Activated CD8-positive, alpha-beta T cell treated with anti-CD3 and anti-CD28 coated beads, Interleukin-2, amount 10 ng/mL, durations not matched to agents 7 days and 5 days (primary cell): ENCODE measurements at regions of chr6 and their contacts with region 1.

Region 1: GRCh38 chr6:118709859-118710350 is 58.5 kb upstream of the CEP85L start:
- DNase-seq: peak; percentile 89
- ATAC-seq: peak; percentile 86
- H3K4me3 Mint-ChIP-seq: peak overlapping the region; percentile 98
- H3K27ac Mint-ChIP-seq: peak overlapping the region; percentile 94
- H3K4me1 Mint-ChIP-seq: peaks cover 63% of the 10 kb centered on the region
- H3K27me3 Mint-ChIP-seq: no peaks in the 10 kb centered on the region

Region 2: GRCh38 chr6:118372413-118372812 is 337.5 kb before region 1 on chr6:
- CTCF ChIA-PET with region 1: no interaction called
- POLR2A ChIA-PET with region 1: no interaction called
- DNase-seq: no peak
- ATAC-seq: no peak
- H3K4me3 Mint-ChIP-seq: no peak overlapping the region
- H3K27ac Mint-ChIP-seq: no peak overlapping the region
- H3K4me1 Mint-ChIP-seq: no peaks in the 10 kb centered on the region
- H3K27me3 Mint-ChIP-seq: no peaks in the 10 kb centered on the region

Region 3: DNA sequence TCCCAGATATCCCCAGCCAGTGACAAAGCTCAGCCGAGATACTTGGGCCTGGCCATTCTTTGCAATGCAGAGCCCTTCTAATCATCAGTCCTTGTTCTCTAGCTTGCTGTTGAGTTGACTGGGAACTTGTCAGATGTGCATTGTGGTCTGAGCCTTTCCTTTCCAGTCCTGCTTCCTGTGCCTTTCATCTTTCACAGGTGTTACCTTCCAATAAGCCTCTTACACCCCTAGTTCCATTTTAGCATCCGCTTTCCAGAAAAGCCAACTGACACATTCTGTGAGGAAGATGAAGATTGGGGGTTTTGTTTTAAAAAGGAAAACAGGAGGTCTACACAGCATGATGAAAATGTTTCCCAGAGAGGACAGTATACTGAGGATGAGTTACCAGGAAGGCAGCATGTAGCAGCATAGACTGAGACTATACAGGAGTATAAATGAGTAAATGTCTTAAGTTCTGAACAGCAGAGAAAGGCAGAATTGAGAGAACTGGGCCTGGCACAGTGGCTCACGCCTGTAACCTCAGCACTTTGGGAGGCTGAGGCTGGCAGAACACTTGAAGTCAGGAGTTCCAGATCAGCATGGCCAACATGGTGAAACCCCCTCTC is 53.0 kb before region 1 on chr6:
- CTCF ChIA-PET with region 1: interaction called, 5 read pairs
- POLR2A ChIA-PET with region 1: interaction called, 35 read pairs
- DNase-seq: peak; percentile 41
- ATAC-seq: peak; percentile 71
- H3K4me3 Mint-ChIP-seq: peak overlapping the region; percentile 6
- H3K27ac Mint-ChIP-seq: peak overlapping the region; percentile 55
- H3K4me1 Mint-ChIP-seq: peaks cover 48% of the 10 kb centered on the region
- H3K27me3 Mint-ChIP-seq: no peaks in the 10 kb centered on the region

Region 4: DNA sequence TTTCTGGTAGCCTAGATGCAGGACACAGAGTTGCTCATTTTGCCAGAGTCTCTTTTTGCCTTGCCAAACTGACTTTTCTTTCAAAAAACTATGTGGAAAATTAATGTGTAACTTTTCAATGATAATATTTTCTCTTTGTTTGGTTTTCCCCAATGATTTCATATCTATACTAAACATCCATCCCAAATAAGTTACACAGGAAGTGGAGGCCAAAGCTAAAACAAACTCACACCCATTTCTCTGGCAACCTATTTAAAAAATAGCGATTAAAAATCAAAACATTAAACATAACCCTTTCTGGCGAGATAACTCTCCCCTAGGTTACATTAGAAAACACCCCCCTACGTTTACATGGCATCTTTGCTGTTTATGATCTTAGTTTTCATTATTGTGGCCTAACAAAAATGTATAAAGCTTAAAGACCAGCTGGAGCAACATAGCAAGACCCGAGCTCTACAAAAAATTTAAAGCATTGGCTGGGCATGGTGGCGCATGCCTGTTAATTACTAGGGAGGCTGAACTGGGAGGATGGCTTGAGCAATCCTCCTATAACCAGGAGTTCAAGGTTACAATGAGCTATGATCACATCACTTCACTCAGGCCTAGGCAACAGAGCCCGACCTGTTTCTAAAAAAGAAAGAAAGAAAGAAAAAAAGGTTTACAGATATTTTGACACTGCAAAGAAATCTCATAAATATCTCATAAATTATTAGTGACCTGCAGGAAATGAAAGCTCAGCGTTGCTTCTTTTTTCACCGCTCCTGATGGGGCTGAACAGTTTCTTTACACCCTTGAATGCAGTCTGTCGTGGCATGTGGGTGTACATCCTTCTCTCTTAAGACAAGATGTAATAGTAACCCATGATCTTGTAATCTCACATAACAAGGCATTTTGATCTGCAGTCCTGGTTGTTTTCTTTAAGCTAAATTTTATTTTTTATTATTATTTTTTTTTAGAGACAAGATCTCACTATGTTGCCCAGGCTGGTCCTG is 25.7 kb before region 1 on chr6:
- CTCF ChIA-PET with region 1: interaction called, 35 read pairs
- POLR2A ChIA-PET with region 1: interaction called, 17 read pairs
- DNase-seq: no peak
- ATAC-seq: no peak
- H3K4me3 Mint-ChIP-seq: no peak overlapping the region
- H3K27ac Mint-ChIP-seq: no peak overlapping the region
- H3K4me1 Mint-ChIP-seq: peaks cover 59% of the 10 kb centered on the region
- H3K27me3 Mint-ChIP-seq: no peaks in the 10 kb centered on the region

Region 5: GRCh38 chr6:118724211-118724610 is 14.3 kb after region 1 on chr6:
- CTCF ChIA-PET with region 1: interaction called, 23 read pairs
- POLR2A ChIA-PET with region 1: interaction called, 33 read pairs
- DNase-seq: no peak
- ATAC-seq: peak; percentile 28
- H3K4me3 Mint-ChIP-seq: peak overlapping the region; percentile 0
- H3K27ac Mint-ChIP-seq: peak overlapping the region; percentile 14
- H3K4me1 Mint-ChIP-seq: peaks cover 57% of the 10 kb centered on the region
- H3K27me3 Mint-ChIP-seq: no peaks in the 10 kb centered on the region

Region 6: DNA sequence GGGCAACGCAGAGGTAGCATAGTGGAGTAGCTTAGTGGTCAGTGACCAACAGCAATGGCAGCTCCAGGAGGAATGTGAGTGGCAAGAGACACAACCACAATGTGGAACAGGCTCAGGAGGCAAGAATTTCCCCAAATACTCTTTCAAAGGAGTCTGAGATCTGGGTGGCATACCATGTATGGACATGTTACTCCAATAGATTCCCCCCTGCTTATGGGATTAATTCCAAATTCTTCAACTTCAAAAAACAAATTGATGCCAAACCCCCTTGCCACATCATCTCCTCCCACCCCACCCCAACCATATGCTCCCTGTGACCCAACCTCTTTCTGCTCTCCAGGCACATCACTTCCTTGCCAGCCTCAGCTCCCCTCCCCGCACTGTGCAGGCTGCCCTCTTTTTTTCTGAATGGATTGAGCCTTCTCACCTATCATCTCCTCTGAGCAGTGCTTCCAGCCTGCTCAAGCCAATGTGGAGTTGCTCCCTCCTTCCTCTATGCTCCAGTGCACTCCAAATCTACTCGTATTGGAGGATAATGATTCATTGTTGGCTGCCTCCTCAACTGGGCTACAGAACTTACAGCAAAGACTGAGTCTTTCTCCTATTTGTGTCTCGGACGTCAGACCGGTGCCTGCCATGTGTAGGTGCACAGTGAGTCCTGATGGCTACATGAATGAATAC is 34.5 kb after region 1 on chr6:
- CTCF ChIA-PET with region 1: no interaction called
- POLR2A ChIA-PET with region 1: no interaction called
- DNase-seq: no peak
- ATAC-seq: no peak
- H3K4me3 Mint-ChIP-seq: no peak overlapping the region
- H3K27ac Mint-ChIP-seq: no peak overlapping the region
- H3K4me1 Mint-ChIP-seq: peaks cover 25% of the 10 kb centered on the region
- H3K27me3 Mint-ChIP-seq: no peaks in the 10 kb centered on the region

Region 7: DNA sequence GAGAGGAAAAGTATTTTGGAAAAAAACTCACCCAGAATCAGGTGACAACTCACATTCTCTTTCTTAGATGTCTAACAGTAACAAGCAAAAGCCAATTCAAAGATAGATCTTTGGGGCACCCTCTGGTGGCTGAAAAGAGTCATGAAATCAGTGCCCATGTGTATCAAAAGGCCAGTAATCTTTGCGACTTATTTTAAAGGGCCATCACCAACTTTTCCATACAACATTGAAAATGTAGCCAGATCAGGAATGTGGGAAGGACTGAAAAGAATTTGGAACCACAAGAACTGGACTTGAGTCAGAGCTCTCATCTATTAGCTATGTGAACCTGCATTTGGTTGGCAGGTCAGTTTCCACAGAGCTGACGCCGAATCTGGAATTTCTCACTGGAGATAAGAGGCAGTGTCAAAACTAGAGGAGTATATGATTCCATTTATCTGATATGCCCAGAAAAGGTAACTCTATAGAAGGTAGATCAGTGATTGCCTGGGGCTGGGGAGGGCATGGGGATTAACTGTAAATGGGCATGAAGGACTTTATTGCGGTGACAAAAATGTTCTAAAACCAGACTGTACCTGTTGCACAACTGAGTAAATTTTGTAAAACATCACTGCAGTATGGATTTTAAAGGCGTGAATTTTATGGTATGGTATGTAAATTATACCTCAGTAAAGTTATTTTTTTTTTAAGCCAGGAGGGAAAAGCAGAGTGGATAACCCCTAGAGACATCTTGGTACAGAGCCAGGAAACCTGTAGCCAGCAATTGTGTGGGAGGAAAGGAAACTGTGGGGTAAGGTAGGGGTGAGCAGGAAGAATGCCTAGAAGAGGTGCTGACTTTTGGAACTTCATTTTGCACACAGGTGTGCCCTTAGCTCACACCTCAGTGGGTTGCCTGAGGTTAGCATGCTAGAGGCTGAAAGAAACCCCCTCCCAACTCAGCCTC is 67.0 kb after region 1 on chr6:
- CTCF ChIA-PET with region 1: interaction called, 13 read pairs
- POLR2A ChIA-PET with region 1: interaction called, 16 read pairs
- DNase-seq: peak; percentile 81
- ATAC-seq: peak; percentile 87
- H3K4me3 Mint-ChIP-seq: no peak overlapping the region
- H3K27ac Mint-ChIP-seq: no peak overlapping the region
- H3K4me1 Mint-ChIP-seq: peaks cover 15% of the 10 kb centered on the region
- H3K27me3 Mint-ChIP-seq: no peaks in the 10 kb centered on the region

Region 8: GRCh38 chr6:118893807-118894424 is 184.0 kb after region 1 on chr6 and contains the start of gene ASF1A:
- CTCF ChIA-PET with region 1: interaction called, 3 read pairs
- POLR2A ChIA-PET with region 1: interaction called, 29 read pairs
- DNase-seq: peak; percentile 97
- ATAC-seq: peak; percentile 82
- H3K4me3 Mint-ChIP-seq: peak within 1 kb of the TSS; percentile 88
- H3K27ac Mint-ChIP-seq: peak within 1 kb of the TSS; percentile 96
- H3K4me1 Mint-ChIP-seq: peaks cover 51% of the 10 kb centered on the region
- H3K27me3 Mint-ChIP-seq: no peaks in the 10 kb centered on the region
- total RNA-seq, gene ASF1A: 49.4 to 51.1 TPM